Panc1 (cell line): ENCODE measurements at regions of chr20 and their contacts with region 1.

Region 1: GRCh38 chr20:35370751-35371150 is 41.0 kb downstream of the UQCC1 start:
- DNase-seq: no peak
- ATAC-seq: no peak
- H3K4me3 ChIP-seq: no peak overlapping the region
- H3K27ac ChIP-seq: no peak overlapping the region
- H3K4me1 ChIP-seq: no peaks in the 10 kb centered on the region
- H3K27me3 ChIP-seq: no peaks in the 10 kb centered on the region
- CTCF ChIP-seq: no peak

Region 2: DNA sequence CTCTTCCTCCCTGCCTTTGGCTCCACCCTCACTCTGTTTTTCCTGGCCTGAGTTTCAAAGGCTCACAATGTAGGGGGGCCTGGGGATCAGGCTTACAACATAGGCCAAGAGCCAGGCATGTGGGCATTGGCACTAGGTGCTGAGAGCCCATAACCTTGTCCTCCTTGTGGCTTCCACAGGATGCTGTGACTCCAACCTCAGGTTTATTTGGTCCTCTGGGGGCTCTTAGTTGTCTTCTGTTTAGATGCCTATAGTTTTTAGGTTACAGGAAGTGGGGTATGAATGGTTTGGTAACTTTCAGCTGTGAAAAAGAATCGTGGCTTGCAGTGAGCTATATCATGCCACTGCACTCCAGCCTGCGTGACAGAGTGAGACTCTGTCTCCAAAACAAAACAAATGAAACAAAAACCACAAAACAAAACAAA is 118.7 kb before region 1 on chr20:
- CTCF ChIA-PET with region 1: no interaction called
- POLR2A ChIA-PET with region 1: no interaction called
- in situ Hi-C with region 1: no loop called
- intact Hi-C with region 1: no loop called
- DNase-seq: no peak
- ATAC-seq: no peak
- H3K4me3 ChIP-seq: no peak overlapping the region
- H3K27ac ChIP-seq: no peak overlapping the region
- H3K4me1 ChIP-seq: no peaks in the 10 kb centered on the region
- H3K27me3 ChIP-seq: no peaks in the 10 kb centered on the region
- CTCF ChIP-seq: no peak

Region 3: GRCh38 chr20:35421322-35421721 is 50.6 kb after region 1 on chr20:
- CTCF ChIA-PET with region 1: no interaction called
- POLR2A ChIA-PET with region 1: interaction called, 15 read pairs
- in situ Hi-C with region 1: no loop called
- intact Hi-C with region 1: no loop called
- DNase-seq: no peak
- ATAC-seq: no peak
- H3K4me3 ChIP-seq: no peak overlapping the region
- H3K27ac ChIP-seq: no peak overlapping the region
- H3K4me1 ChIP-seq: no peaks in the 10 kb centered on the region
- H3K27me3 ChIP-seq: no peaks in the 10 kb centered on the region
- CTCF ChIP-seq: no peak